ENCODE measurements at regions of chr19 and their contacts with region 1.

Region 1: GRCh38 chr19:50705422-50706019 is 14.1 kb downstream of the SHANK1 start:
- DNase-seq: no peak
- ATAC-seq: peak; percentile 44 to 72

Region 2: DNA sequence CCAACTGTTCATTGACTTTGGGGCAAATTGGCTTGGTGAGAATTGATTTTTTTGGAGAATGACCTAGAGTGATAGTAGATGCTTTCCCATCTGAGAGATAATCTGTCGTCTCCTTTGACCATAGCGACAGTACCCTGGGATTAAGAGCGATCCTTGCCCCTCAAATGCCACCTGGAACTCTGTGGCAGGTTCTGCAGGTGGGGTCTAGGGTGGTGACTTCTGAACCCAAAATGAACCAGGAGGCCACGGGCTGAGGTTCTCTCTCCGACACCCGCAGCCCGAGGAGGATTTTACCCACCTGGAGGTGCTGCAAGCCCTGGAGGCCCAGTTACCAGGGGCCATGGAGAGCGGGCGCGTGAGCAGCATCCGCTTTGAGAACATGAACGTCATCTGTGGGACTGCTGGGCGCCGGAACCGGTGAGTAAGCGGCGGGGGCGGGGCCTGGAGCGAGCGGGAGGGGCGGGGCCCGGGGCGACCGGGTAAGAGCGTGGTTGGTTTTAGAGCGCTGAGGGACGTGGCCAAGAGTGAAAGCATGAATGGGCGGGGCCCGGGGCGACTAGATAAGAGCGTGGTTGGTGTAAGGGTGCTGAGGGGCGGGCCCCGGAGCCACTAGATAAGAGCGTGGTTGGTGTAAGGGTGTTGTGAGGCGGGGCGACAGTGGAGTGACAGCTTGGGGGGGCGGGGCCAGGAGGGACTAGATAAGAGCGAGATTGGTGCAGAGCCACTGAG is 47.6 kb before region 1 on chr19:
- intact Hi-C with region 1: no loop called
- DNase-seq: peak; percentile 95
- ATAC-seq: peak; percentile 94 to 96

Region 3: DNA sequence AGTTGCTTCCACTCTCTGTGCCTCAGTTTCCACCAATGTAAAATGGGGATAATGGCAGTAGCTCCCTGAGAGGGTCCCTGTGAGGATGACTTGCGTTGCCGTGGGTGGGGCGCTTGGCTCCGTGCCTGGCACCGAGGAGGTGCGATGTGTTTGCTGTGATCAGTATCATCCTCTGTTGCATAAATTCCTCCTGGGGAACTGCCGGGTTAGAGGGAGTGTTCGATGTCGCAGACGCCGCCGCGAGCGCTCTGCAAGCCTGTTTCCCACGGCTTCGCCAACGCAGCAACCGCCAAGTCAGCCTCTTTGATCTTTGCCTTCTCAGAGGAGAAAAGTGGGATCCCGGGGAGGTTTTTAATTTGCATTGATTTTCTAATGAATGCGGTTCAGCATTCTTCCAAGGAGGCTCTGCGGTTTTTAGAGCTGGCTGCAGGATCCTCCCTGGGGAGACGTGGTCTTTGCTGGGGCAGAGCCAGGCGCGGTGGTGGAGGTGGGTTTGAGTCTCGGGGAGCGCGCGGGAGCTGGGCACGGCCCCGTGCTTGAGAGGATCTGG is 72.3 kb after region 1 on chr19:
- intact Hi-C with region 1: loop called (anchors 10 kb)
- DNase-seq: no peak
- ATAC-seq: no peak